Activated CD4-positive, alpha-beta memory T cell treated with anti-CD3 and anti-CD28 coated beads for 36 hours (primary cell): ENCODE measurements at regions of chr4 and their contacts with region 1.

Region 1: GRCh38 chr4:128287871-128288688 is 467 bp upstream of the PGRMC2 start:
- DNase-seq: peak; percentile 100
- H3K4me3 Mint-ChIP-seq: peak overlapping the region; percentile 93
- H3K27ac Mint-ChIP-seq: peak overlapping the region; percentile 88
- H3K4me1 Mint-ChIP-seq: peaks cover 31% of the 10 kb centered on the region
- H3K27me3 Mint-ChIP-seq: no peaks in the 10 kb centered on the region

Region 2: GRCh38 chr4:127880764-127881562 is 407.1 kb before region 1 on chr4 and contains the start of gene PLK4:
- CTCF ChIA-PET with region 1: no interaction called
- POLR2A ChIA-PET with region 1: interaction called, 3 read pairs
- intact Hi-C with region 1: loop called (anchors 1 kb)
- DNase-seq: peak; percentile 97
- H3K4me3 Mint-ChIP-seq: peak within 1 kb of the TSS; percentile 95
- H3K27ac Mint-ChIP-seq: peak within 1 kb of the TSS; percentile 98
- H3K4me1 Mint-ChIP-seq: peaks cover 14% of the 10 kb centered on the region
- H3K27me3 Mint-ChIP-seq: peaks cover 2% of the 10 kb centered on the region
- total RNA-seq, gene PLK4: 43.5 to 45.6 TPM

Region 3: DNA sequence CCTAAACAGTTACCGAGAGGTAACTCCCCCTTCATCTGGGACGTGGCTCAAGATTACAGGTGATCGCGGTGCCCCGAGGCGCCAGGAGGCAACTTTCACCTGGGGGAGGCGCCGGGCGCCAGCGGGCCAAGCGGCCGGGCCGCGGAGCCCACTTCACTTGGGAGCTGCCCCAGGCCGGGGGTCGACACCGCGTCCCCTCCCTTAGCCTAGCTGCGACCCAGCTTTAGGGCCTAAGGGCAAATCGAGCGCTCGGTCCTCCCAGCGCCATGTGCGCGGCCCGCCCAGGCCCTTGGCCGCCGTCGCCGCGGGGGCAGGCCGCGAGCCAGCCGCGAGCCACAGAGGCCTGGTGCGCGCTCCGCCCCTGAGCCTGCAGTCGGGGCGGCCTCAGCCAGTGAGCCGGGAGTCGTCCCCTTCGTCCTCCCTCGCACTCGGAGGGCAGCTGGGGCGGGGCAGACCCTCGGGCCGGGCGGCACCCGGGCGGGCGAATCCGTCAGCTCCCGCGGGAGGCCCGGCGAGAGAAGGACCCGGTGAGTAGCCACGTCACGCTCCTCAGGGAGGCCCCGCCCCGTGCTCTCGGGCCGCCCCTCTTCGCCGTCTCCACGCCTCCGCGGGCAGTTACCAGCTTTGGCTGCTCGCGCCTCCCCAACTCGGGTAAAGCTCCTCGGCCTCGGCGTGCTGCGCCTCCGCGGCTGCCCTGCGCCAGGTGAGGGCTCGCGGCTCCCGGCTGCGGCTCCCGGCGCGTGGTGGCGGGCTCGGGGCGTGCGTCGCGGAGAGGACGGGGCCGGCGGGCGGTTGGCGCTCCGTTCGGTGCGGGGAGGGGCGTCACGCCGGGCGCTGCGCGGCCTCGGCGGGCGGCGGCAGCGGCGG is 227.1 kb before region 1 on chr4 and contains the start of gene LARP1B:
- CTCF ChIA-PET with region 1: no interaction called
- POLR2A ChIA-PET with region 1: interaction called, 18 read pairs
- intact Hi-C with region 1: loop called (anchors 1 kb)
- DNase-seq: peak; percentile 95
- H3K4me3 Mint-ChIP-seq: peak within 1 kb of the TSS; percentile 87
- H3K27ac Mint-ChIP-seq: peak within 1 kb of the TSS; percentile 87
- H3K4me1 Mint-ChIP-seq: peaks cover 15% of the 10 kb centered on the region
- H3K27me3 Mint-ChIP-seq: no peaks in the 10 kb centered on the region
- total RNA-seq, gene LARP1B: 23.5 to 25.5 TPM

Region 4: DNA sequence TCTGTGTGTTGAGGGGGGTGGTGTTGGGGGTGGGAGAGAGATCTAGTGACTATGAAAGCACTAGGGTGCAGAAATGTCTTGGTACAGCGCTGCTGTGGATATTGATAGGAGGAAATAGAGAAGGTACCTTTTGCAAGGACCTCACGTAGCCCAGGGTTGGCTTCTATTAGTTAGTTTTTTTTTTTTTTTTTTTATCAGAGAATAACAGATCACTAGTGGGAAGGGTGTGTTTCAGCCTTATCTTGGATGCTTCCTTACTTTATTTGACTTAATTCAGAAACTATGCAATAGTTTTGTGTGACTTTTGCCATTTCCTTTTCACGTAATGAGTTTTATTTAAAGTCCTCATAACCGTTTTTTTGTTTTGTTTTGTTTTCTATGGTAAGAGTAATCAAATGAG is 15.9 kb after region 1 on chr4:
- CTCF ChIA-PET with region 1: no interaction called
- POLR2A ChIA-PET with region 1: no interaction called
- intact Hi-C with region 1: loop called (anchors 2 kb)
- DNase-seq: no peak
- H3K4me3 Mint-ChIP-seq: no peak overlapping the region
- H3K27ac Mint-ChIP-seq: no peak overlapping the region
- H3K4me1 Mint-ChIP-seq: no peaks in the 10 kb centered on the region
- H3K27me3 Mint-ChIP-seq: no peaks in the 10 kb centered on the region

Region 5: DNA sequence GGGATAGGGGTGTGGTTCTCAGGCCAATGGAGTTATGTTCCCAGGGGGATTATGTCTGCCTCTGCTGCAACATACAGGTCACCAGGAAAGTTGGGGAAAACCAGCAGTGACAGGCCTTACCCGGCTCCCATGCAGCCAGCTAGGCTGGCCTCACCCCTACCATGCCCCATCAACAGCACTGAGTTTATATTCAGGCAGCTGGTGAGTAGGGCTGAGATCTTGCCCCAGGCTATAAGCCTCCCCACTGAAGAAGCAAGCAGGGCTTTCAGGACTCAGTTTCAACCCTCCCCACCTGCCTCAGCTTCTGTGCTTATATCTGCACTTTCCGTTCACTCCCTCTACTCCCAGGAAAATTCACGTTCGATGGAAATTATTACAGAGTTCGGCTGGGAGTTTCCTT is 122.0 kb after region 1 on chr4:
- CTCF ChIA-PET with region 1: no interaction called
- POLR2A ChIA-PET with region 1: no interaction called
- intact Hi-C with region 1: no loop called
- DNase-seq: no peak
- H3K4me3 Mint-ChIP-seq: no peak overlapping the region
- H3K27ac Mint-ChIP-seq: no peak overlapping the region
- H3K4me1 Mint-ChIP-seq: no peaks in the 10 kb centered on the region
- H3K27me3 Mint-ChIP-seq: no peaks in the 10 kb centered on the region

Region 6: GRCh38 chr4:128558896-128559679 is 271.0 kb after region 1 on chr4:
- CTCF ChIA-PET with region 1: no interaction called
- POLR2A ChIA-PET with region 1: no interaction called
- intact Hi-C with region 1: loop called (anchors 10 kb)
- DNase-seq: no peak
- H3K4me3 Mint-ChIP-seq: no peak overlapping the region
- H3K27ac Mint-ChIP-seq: no peak overlapping the region
- H3K4me1 Mint-ChIP-seq: peaks cover 1% of the 10 kb centered on the region
- H3K27me3 Mint-ChIP-seq: peaks cover 2% of the 10 kb centered on the region

Region 7: GRCh38 chr4:128675083-128675482 is 387.0 kb after region 1 on chr4:
- CTCF ChIA-PET with region 1: no interaction called
- POLR2A ChIA-PET with region 1: no interaction called
- intact Hi-C with region 1: no loop called
- DNase-seq: no peak
- H3K4me3 Mint-ChIP-seq: no peak overlapping the region
- H3K27ac Mint-ChIP-seq: no peak overlapping the region
- H3K4me1 Mint-ChIP-seq: peaks cover 2% of the 10 kb centered on the region
- H3K27me3 Mint-ChIP-seq: peaks cover 3% of the 10 kb centered on the region

Region 8: GRCh38 chr4:129093191-129093920 is 805.3 kb after region 1 on chr4 and contains the start of gene SCLT1:
- CTCF ChIA-PET with region 1: no interaction called
- POLR2A ChIA-PET with region 1: no interaction called
- intact Hi-C with region 1: loop called (anchors 1 kb)
- DNase-seq: peak; percentile 98
- H3K4me3 Mint-ChIP-seq: peak within 1 kb of the TSS; percentile 53
- H3K27ac Mint-ChIP-seq: no peak within 1 kb of the TSS
- H3K4me1 Mint-ChIP-seq: peaks cover 33% of the 10 kb centered on the region
- H3K27me3 Mint-ChIP-seq: no peaks in the 10 kb centered on the region
- total RNA-seq, gene SCLT1: 20.8 to 20.9 TPM